Transverse colon (tissue), 4 donors: ENCODE measurements at regions of chr6 and their contacts with region 1.

Region 1: GRCh38 chr6:3162565-3163247 is 5.4 kb upstream of the TUBB2A start:
- DNase-seq: peak; percentile 82
- H3K4me3 ChIP-seq: peak overlapping the region; percentile 66 to 80 (median 71)
- H3K27ac ChIP-seq: peak overlapping the region; percentile 93 to 96 (median 96)
- H3K4me1 ChIP-seq: peaks cover 0 to 45% (median 19%) of the 10 kb centered on the region in 4 donors
- H3K27me3 ChIP-seq: no peaks in the 10 kb centered on the region
- CTCF ChIP-seq: peak in 2 of 5 experiments; percentile 11 to 30
- EP300 ChIP-seq: no peak
- POLR2A ChIP-seq: peak; percentile 77

Region 2: GRCh38 chr6:3231247-3232016 is 68.7 kb after region 1 on chr6:
- in situ Hi-C with region 1: no loop called
- intact Hi-C with region 1: loop called (anchors 2 kb)
- DNase-seq: peak; percentile 84
- H3K4me3 ChIP-seq: peak overlapping the region; percentile 29 to 56 (median 41)
- H3K27ac ChIP-seq: peak overlapping the region; percentile 65 to 83 (median 72)
- H3K4me1 ChIP-seq: peaks cover 16 to 58% (median 53%) of the 10 kb centered on the region in 4 donors
- H3K27me3 ChIP-seq: peaks cover 97% of the 10 kb centered on the region
- CTCF ChIP-seq: no peak
- EP300 ChIP-seq: no peak
- POLR2A ChIP-seq: no peak

Region 3: DNA sequence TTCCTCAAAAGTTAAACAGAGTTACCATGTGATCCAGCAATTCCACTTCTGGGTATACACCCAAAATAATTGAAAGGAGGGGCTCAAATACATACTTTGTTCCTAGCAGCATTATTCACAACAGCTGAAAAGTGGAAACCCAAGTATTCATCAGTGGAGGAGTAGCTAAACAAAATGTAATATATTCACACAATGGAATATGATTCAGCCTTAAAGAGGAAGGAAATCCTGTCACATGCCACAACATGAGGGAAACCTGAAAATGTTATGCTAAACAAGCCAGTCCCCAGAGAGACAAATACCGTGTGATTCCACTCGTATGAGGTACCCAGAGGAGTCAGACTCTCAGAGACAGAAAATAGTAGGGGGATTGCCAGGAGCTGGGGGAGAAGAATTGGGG is 544.3 kb after region 1 on chr6:
- in situ Hi-C with region 1: no loop called
- intact Hi-C with region 1: no loop called
- DNase-seq: no peak
- H3K4me3 ChIP-seq: no peak overlapping the region
- H3K27ac ChIP-seq: no peak overlapping the region
- H3K4me1 ChIP-seq: no peaks in the 10 kb centered on the region
- H3K27me3 ChIP-seq: no peaks in the 10 kb centered on the region
- CTCF ChIP-seq: no peak
- EP300 ChIP-seq: no peak
- POLR2A ChIP-seq: no peak